Astrocyte of the cerebellum (primary cell): ENCODE measurements at regions of chr1 and their contacts with region 1.

Region 1: DNA sequence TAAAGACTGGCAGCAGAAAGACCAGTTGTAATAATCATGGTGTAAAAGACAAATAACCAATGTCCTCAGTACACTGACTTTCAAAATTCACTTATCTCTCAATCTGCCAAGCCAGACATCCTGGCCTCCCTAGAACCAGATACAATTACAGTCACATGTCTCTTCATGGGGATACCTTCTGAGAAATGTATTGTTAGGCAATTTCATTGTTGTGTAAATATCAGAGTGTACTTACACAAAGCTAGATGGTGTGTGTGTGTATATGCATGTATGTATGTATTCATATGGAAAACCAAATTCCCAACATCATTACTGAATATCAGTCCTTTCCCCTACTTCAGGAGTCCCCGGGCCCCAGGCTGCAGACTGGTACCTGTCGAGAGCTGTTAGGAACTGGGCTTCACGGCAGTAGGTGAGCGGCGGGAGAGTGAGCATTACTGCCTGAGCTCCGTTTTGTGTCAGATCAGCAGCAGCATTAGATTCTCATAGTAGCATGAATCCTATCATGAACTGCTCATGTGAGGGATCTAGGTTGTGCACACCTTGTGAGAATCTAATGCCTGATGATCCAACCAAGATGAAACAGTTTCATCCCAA is 65.3 kb upstream of the ZNF326 start:
- DNase-seq: no peak
- H3K4me3 ChIP-seq: no peak overlapping the region
- CTCF ChIP-seq: no peak

Region 2: GRCh38 chr1:89865498-89866385 is 63.8 kb before region 1 on chr1:
- in situ Hi-C with region 1: loop called (anchors 10 kb)
- DNase-seq: no peak
- H3K4me3 ChIP-seq: no peak overlapping the region
- CTCF ChIP-seq: no peak

Region 3: DNA sequence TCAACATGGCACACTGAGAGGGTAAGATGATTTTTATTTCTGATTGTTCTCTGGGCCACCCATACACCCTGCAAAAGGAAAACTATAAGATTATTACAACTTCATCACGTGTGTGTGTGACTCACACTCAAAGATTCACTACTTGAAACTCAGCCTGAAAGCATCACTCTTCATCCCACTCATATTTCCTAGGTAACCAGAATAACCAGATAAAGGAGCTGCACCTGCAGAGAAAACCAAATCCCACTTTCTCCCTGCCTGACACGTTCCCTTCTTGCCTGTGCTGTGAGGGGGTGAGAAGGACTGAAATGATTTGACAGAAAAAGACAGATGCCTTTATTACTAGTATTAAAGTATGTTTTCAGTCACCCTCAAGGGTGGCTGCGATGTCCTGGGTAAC is 1824.8 kb after region 1 on chr1:
- in situ Hi-C with region 1: no loop called
- DNase-seq: no peak
- H3K4me3 ChIP-seq: no peak overlapping the region
- CTCF ChIP-seq: no peak